ENCODE measurements at regions of chr17 and their contacts with region 1.

Region 1: GRCh38 chr17:78736526-78737079 is 45.5 kb downstream of the CYTH1 start:
- DNase-seq: peak; percentile 94

Region 2: DNA sequence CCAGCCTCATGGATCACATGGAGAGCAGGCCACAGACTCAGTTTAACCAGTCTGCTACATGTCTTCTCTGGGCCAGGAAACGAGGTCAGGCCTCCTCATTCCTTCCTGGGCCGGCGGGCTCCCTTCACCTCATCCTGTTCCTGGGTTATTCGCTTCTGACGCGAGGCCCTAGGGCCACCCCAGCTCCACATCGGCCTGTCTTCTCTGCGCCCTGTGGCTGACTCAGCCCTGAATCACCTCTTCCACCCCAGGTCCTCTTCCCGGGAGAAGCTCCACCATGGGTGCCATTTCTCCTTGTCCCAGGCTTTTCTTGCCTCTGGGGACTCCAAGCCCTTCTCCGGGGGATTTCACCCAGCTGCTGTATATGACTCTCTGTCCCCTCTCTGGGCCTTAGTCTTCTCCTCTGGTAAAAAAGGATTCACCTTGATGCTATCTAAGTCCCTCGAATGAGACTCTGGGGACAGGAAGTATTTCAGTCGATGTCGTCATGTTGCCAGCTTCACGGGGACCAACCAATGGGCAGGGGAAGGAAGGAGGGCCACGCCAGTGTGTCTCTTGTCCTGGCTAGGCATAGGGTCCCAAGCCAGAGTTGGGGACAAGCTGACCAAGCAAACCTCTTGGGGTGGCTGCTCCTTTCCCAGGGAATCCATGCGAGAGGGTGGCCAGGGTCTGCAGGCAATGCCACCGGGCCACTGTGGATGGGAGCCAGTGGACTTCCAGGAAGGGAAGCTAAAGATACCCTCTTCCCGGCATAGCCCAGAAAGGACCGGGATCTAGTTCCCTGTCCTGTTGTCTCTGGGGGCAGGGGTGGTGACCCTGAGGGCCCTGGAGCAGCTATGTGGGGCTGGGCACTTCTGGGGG is 435.4 kb before region 1 on chr17:
- intact Hi-C with region 1: no loop called
- DNase-seq: no peak

Region 3: GRCh38 chr17:78781948-78782916 is 45.6 kb after region 1 on chr17 and contains the start of gene CYTH1:
- intact Hi-C with region 1: loop called (anchors 5 kb)
- DNase-seq: peak; percentile 99
- total RNA-seq, gene CYTH1: 29.4 TPM

Region 4: DNA sequence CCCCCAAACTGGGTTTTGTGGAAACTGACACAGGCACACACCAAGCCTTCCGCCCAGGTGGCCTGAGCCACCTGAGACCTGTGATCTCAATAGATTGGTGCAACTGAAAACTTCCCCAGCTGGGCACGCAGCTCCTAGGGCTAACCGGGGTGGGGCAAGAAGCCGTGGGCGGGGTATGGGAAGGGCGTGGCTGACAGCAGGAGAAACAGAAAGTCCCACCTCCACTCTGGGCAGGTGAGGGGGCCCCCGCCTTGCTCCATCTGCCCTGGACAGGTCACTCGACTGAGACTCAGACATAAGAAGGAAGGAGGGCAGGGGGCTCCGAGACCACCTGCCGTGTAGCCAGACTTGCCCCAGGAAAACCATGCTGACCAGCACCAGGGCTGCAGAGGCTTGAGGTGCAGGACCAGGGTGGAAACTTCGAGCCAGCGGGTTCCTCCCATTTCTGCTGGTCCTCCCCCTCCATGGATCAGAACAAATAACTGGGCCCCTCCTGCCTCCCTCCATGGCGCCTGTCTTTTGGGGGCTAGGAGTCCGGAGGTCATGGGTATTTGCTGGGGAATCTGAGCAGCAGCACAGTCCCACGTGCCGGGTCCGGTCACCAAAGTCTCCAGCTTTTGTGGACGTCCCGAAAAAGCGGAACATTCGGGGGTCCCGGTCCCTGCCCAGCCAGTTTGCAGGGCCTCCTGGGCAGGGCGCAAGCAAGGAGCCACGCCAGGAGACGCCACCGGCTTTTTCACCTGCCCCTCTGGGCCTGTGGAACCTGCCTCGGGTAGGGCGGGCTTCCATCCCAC is 187.3 kb after region 1 on chr17:
- intact Hi-C with region 1: no loop called
- DNase-seq: peak; percentile 95